Transverse colon (tissue), 4 donors: ENCODE measurements at regions of chr9 and their contacts with region 1.

Region 1: DNA sequence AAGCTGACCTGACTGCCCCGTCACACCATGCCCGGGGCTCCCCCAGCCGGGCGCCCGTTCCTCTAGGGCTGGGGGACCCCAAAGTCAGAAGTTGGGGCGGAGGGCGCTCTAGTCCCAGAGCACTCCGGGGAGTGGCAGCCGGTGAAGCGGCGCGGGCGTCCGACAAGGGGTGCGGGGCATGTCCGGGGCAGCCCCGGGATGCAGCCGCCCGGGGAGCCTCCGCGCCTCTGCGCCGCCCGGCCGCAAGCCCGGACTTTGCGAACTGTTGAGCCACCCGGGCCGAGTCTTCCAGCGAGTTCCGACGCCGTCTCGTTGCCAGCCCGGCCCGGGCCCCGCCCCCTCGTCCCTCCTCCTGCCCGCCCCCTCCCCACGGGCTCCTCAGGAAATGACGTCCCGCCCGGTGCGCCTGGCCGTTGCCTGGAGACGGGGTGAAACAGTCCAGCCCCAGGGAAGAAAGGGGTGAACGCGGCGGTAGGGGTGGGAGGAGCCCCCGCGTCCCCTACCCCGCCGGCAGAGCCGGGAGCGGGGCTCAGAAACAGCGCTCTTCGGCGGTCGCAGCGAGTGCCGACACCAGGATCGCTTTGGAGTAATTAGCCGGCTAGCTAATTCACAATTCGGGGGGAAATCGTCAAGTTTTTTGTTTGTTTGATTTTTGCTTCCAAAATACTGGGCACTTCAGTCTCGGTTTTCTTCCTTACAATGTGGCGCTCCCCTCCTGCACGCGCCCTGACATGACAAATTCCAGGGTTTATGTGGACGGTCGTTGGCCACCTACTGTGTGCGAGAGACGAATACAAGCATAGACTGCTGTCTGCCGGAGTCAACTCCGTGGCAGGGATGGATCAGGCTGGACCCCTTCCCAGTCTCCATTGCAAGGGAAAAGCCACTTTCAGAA is at the start of gene WHRN:
- DNase-seq: peak; percentile 95
- H3K4me3 ChIP-seq: peak within 1 kb of the TSS; percentile 59 to 73 (median 72)
- H3K27ac ChIP-seq: peak within 1 kb of the TSS; percentile 74 to 89 (median 82)
- H3K4me1 ChIP-seq: peaks cover 5 to 27% (median 19%) of the 10 kb centered on the region in 4 donors
- H3K27me3 ChIP-seq: peaks cover 4% of the 10 kb centered on the region
- CTCF ChIP-seq: no peak
- EP300 ChIP-seq: no peak
- POLR2A ChIP-seq: peak; percentile 68
- total RNA-seq, gene WHRN: 5.4 to 23.6 (median 8.5) TPM

Region 2: GRCh38 chr9:114405294-114406034 is 100.0 kb before region 1 on chr9:
- in situ Hi-C with region 1: loop called in 1 of 4 experiments (anchors 10 kb)
- intact Hi-C with region 1: no loop called
- DNase-seq: peak; percentile 85
- H3K4me3 ChIP-seq: no peak overlapping the region
- H3K27ac ChIP-seq: no peak overlapping the region
- H3K4me1 ChIP-seq: peaks cover 0 to 12% (median 5%) of the 10 kb centered on the region in 4 donors
- H3K27me3 ChIP-seq: no peaks in the 10 kb centered on the region
- CTCF ChIP-seq: peak; percentile 76 to 87 (median 83)
- EP300 ChIP-seq: no peak
- POLR2A ChIP-seq: no peak

Region 3: DNA sequence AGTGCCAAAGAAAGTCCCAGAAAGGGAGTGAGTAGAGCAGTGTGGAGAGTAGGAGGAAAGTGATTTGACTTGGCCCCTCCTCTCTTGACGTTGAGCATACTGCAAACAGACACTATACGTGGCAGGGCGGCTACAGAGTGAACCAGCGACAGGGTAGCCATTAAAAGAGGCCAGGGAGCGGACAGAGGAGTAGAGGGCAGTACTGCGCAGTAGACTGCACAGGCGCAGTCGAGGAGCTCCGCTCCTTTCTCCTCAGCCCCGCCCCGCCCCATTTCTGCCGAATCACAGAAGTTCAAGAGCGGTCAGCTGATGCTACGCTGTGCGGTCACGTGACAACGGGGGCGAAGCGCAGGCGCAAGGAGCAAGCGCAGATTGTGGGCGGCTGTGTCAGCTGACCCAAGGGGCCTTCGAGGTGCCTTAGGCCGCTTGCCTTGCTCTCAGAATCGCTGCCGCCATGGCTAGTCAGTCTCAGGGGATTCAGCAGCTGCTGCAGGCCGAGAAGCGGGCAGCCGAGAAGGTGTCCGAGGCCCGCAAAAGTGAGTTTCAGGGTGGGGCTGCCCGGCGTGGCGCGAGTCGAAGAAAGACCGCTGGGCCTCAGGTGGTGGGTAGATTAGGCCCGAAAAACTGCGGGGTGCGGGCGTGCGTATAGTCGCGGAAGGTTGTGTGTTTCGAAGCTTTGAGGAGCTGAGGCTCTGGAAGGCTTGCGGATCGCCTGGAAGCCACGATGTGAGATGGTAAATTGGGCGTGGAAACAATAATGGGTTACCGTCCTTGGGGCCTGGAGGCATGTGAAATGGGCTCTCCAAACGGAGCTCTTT is 82.2 kb after region 1 on chr9 and contains the start of gene ATP6V1G1:
- in situ Hi-C with region 1: no loop called
- intact Hi-C with region 1: loop called (anchors 10 kb)
- DNase-seq: peak; percentile 100
- H3K4me3 ChIP-seq: peak within 1 kb of the TSS; percentile 66 to 88 (median 81)
- H3K27ac ChIP-seq: peak within 1 kb of the TSS; percentile 92 to 98 (median 94)
- H3K4me1 ChIP-seq: peaks cover 22 to 49% (median 42%) of the 10 kb centered on the region in 4 donors
- H3K27me3 ChIP-seq: no peaks in the 10 kb centered on the region
- CTCF ChIP-seq: no peak
- EP300 ChIP-seq: no peak
- POLR2A ChIP-seq: peak; percentile 96
- total RNA-seq, gene ATP6V1G1: 102 to 144 (median 131) TPM

Region 4: DNA sequence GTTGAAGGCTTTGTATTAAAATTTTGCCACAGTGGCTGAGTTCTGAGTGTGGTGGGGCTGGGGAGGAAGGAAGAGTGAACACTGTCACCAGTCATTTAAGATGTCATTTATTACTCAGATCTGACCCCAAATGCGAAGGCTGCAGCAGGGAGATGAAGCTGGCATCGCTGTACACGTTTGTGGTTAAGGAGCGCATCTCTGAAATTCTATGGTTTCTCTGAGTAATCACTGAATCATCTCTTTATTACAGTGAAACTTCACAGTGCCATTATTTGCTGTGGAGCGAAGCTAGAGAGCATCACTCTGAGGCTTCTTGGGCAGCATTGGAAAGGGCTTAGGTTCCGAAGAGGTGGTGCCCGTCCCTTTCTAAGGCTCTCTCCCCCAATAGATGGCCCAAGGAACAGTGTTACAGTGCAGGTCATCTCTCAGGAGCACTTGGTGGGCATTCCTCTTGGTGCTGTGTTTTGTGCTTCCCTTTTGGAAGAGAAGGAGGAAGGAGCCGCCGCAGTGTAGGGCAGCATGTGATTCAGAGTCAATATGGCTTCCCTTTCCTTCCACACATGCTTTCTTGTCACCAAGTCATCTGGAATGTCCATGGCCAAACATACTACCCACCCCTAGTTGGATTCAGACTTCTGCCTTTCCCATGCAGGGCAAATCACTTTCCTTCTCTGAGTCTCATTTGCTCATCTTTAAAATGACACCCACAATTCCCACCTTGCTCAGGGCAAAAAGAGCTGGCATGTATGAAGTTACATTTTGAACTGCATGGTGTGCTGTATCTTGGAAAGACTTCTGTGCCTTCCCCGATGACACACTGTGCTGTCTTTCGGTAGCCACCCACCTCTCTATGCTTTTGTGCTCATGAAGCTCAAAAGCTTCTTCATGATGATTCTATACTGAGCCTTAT is 185.9 kb after region 1 on chr9:
- in situ Hi-C with region 1: no loop called
- intact Hi-C with region 1: no loop called
- DNase-seq: no peak
- H3K4me3 ChIP-seq: no peak overlapping the region
- H3K27ac ChIP-seq: no peak overlapping the region
- H3K4me1 ChIP-seq: peaks cover 0 to 10% (median 6%) of the 10 kb centered on the region in 4 donors
- H3K27me3 ChIP-seq: no peaks in the 10 kb centered on the region
- CTCF ChIP-seq: no peak
- EP300 ChIP-seq: no peak
- POLR2A ChIP-seq: no peak